HepG2 (cell line): ENCODE measurements at regions of chr5 and their contacts with region 1.

Region 1: GRCh38 chr5:158461240-158461854 is 602.4 kb upstream of the CLINT1 start:
- DNase-seq: peak; percentile 81
- ATAC-seq: peak; percentile 99
- H3K4me3 ChIP-seq: no peak overlapping the region; a peak in 1 of 6 replicates
- H3K27ac ChIP-seq: peak overlapping the region; percentile 81
- H3K4me1 ChIP-seq: peaks cover 50% of the 10 kb centered on the region
- H3K27me3 ChIP-seq: no peaks in the 10 kb centered on the region
- CTCF ChIP-seq: no peak
- EP300 ChIP-seq: peak; percentile 77 to 98; a peak in 3 of 4 replicates
- POLR2A ChIP-seq: no peak
- RAD21 ChIP-seq: no peak

Region 2: GRCh38 chr5:158450721-158451120 is 10.6 kb before region 1 on chr5:
- CTCF ChIA-PET with region 1: no interaction called
- POLR2A ChIA-PET with region 1: no interaction called
- in situ Hi-C with region 1: no loop called
- intact Hi-C with region 1: no loop called
- DNase-seq: no peak
- ATAC-seq: no peak
- H3K4me3 ChIP-seq: no peak overlapping the region
- H3K27ac ChIP-seq: no peak overlapping the region
- H3K4me1 ChIP-seq: no peaks in the 10 kb centered on the region; the same call in 1 of the 2 replicates
- H3K27me3 ChIP-seq: peaks cover 0 to 8% of the 10 kb centered on the region in 2 experiments; a peak in 1 of 5 replicates
- CTCF ChIP-seq: no peak
- EP300 ChIP-seq: no peak
- POLR2A ChIP-seq: no peak
- RAD21 ChIP-seq: no peak

Region 3: DNA sequence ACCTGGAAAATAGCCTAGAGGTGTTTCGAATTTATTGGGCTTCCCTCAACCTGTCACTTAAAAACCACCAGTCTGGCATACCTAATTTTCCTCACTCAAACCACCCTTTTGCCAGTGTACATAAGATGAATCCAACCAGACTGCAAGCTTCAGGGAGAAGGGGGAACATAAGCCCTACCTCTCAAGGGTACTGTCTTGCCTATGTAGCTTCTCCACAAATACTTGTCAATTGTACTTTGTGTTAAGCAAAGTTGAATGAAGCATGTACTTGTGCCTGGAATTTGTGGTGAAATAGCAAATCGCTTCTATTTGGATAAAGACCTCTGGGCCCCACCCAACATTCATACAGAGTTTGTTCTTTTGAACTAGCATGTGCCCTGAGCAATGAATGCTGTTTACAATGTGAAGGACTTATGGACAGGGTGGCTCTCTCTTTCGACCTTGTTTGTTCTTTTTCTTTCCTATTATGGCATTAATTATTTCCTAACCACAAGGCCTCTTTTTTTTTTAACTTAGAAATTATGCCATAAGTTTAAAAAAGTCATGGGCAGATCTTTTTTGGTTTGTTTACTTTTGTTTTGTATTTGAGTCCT is 58.2 kb after region 1 on chr5:
- CTCF ChIA-PET with region 1: no interaction called
- POLR2A ChIA-PET with region 1: no interaction called
- in situ Hi-C with region 1: no loop called
- intact Hi-C with region 1: loop called (anchors 2 kb)
- DNase-seq: peak; percentile 75
- ATAC-seq: peak; percentile 99
- H3K4me3 ChIP-seq: no peak overlapping the region; a peak in 1 of 6 replicates
- H3K27ac ChIP-seq: peak overlapping the region; percentile 61
- H3K4me1 ChIP-seq: peaks cover 23% of the 10 kb centered on the region
- H3K27me3 ChIP-seq: no peaks in the 10 kb centered on the region
- CTCF ChIP-seq: no peak
- EP300 ChIP-seq: peak in 1 of 2 experiments; percentile 90; a peak in 2 of 4 replicates
- POLR2A ChIP-seq: no peak
- RAD21 ChIP-seq: no peak

Region 4: DNA sequence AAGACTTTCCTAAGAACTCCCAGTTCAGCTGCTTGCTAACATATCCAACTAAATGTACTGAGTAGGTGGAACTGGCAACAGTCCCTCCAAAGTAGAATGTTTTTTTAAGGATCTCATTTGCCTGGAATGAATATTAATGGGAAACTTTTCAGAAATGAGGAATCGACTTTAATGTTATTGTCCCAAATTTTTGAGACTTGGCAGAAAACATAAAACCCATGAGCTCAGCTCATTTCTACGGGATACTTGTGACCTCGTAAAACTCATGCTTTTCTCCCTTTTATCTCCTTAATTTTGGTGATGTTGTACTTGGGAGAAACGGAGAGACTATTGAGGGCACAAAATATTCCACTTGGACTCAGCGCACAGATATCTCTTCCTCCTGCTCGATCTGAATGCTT is 341.6 kb after region 1 on chr5:
- CTCF ChIA-PET with region 1: no interaction called
- POLR2A ChIA-PET with region 1: no interaction called
- in situ Hi-C with region 1: no loop called
- intact Hi-C with region 1: no loop called
- DNase-seq: no peak
- ATAC-seq: no peak
- H3K4me3 ChIP-seq: no peak overlapping the region
- H3K27ac ChIP-seq: no peak overlapping the region
- H3K4me1 ChIP-seq: no peaks in the 10 kb centered on the region
- H3K27me3 ChIP-seq: no peaks in the 10 kb centered on the region
- CTCF ChIP-seq: no peak
- EP300 ChIP-seq: no peak
- POLR2A ChIP-seq: no peak
- RAD21 ChIP-seq: no peak